K562 (cell line): ENCODE measurements at regions of chr1 and their contacts with region 1.

Region 1: DNA sequence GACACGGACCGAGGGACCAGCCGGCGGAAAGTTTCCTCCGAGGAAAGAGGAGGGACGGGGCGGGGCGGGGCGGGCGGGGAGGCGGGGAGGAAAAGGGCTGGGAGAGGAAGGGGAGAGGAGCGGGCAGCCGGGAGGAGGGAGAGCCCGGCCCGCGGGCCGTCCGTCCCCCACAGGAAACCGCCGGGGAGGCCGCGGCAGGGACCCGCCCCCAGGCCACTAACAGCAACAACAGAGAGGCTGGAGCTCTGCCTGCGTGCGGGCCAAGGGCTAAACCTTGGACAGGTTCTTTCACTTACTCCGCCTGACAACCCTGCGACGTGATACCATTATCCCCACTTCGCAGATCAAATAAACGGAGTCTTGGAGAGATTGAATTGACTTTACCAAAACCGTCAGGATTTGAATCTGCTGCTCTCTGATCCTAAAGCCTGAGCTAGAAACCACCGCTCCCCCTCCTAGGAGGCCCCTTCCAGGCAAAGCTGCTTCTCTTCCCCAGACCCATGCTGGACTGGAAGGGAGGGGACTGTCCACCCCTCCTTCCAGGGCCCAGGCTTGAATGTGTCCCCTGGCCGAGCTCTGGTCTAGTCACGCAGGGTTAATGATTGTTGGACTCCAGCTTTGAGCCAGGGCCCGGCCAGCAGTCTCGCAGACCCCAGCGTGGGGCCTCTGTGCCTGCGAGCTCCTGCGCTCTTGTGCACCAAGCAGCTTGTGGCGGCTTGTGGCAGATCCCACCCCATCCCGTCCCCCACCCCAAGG is at the start of gene EVA1B:
- DNase-seq: peak; percentile 89 to 91 (median 90)
- ATAC-seq: peak; percentile 31
- H3K4me3 ChIP-seq: peak within 1 kb of the TSS; percentile 61
- H3K27ac ChIP-seq: peak within 1 kb of the TSS; percentile 62
- H3K4me1 ChIP-seq: peaks cover 39 to 73% of the 10 kb centered on the region in 2 experiments
- H3K27me3 ChIP-seq: no peaks in the 10 kb centered on the region
- CTCF ChIP-seq: no peak
- EP300 ChIP-seq: no peak
- POLR2A ChIP-seq: no peak; the same call in 1 of the 2 replicates
- RAD21 ChIP-seq: no peak
- polyA plus RNA-seq, gene EVA1B: 0.08 to 0.13 TPM

Region 2: DNA sequence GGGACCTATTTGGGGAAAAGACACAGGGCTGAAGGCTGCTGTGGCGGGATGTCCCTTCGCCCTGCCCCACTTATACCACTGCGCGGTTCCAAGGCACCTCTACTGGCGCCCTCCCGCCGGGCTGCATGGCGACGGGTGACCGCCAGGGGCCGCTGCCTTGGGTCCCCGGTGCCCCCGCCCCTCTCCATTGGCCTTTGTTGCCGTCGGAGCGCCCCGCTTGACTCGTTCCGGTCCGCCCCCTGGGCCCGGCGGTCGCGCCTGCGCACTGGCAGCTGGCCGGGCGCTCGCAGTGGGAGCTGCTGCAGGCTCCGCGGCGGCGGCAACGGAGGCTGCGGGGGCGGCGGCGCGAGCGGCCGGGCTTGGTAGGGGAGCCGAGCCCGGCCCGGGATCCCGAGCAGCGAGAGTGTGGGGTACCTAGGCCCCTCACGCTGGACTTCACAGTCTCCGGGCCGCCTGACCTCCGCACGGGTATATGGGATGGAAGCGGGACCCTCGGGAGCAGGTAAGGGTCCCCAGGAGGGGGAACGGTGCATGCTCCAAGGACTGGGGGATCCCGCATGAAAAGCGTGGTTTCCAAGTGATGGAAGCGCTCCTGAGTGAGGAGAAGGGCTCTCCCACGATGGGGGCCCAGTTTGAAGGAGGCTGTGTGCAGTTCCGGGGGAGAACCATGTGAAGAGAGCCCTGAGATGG is 440.7 kb before region 1 on chr1 and contains the start of gene AGO1:
- CTCF ChIA-PET with region 1: no interaction called
- POLR2A ChIA-PET with region 1: no interaction called
- in situ Hi-C with region 1: no loop called
- intact Hi-C with region 1: loop called (anchors 10 kb)
- DNase-seq: peak; percentile 97 to 99 (median 99)
- ATAC-seq: peak; percentile 79
- H3K4me3 ChIP-seq: peak within 1 kb of the TSS; percentile 64
- H3K27ac ChIP-seq: peak within 1 kb of the TSS; percentile 73
- H3K4me1 ChIP-seq: peaks cover 47 to 72% of the 10 kb centered on the region in 2 experiments
- H3K27me3 ChIP-seq: no peaks in the 10 kb centered on the region
- CTCF ChIP-seq: peak; percentile 95 to 97 (median 97)
- EP300 ChIP-seq: no peak; the same call in 1 of the 2 replicates
- POLR2A ChIP-seq: peak; percentile 51; the same call in 1 of the 2 replicates
- RAD21 ChIP-seq: peak; percentile 56 to 73
- polyA plus RNA-seq, gene AGO1: 7.3 to 13.3 TPM

Region 3: GRCh38 chr1:36160949-36161485 is 162.8 kb before region 1 on chr1:
- CTCF ChIA-PET with region 1: no interaction called
- POLR2A ChIA-PET with region 1: no interaction called
- in situ Hi-C with region 1: no loop called
- intact Hi-C with region 1: no loop called
- DNase-seq: peak; percentile 65 to 72 (median 72)
- ATAC-seq: peak; percentile 64
- H3K4me3 ChIP-seq: peak overlapping the region; percentile 37
- H3K27ac ChIP-seq: peak overlapping the region; percentile 76
- H3K4me1 ChIP-seq: peaks cover 42 to 55% of the 10 kb centered on the region in 2 experiments
- H3K27me3 ChIP-seq: no peaks in the 10 kb centered on the region
- CTCF ChIP-seq: peak; percentile 60 to 76 (median 63)
- EP300 ChIP-seq: 0 out of 2 replicates have a peak, but pooled peaks have one; percentile 17
- POLR2A ChIP-seq: peak; percentile 70
- RAD21 ChIP-seq: peak; percentile 13 to 48; a peak in 3 of 4 replicates

Region 4: DNA sequence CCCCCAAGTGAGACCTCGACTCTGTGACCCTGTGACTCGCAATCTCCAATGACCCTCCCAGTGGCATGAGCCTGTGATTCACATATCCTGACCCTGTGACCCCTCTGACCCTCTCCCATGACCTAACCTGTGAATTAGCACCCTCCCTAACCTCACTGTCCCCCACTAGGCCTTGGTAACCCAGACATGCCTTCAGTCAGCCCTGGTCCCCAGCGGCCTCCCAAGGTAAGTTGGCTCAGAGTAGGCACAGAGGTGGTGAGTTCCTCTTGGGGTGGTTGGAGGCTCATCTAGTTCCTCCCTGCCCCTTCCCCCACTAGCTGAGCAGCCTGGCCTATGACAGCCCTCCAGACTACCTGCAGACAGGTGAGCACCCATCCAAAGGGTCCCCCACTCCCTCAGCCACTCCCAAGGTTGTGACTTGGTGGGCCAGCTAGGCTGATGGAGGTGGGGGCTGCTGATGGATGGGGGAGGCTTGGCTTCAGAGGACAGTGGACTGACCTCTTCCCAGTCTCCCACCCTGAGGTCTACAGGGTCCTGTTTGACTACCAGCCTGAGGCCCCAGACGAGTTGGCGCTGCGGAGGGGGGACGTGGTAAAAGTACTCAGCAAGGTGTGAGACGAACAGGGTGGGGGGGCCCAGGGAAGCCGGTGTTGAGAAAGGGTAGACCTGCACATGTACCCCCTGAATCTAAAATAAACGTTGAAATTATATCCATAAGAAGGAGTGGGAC is 16.0 kb before region 1 on chr1:
- CTCF ChIA-PET with region 1: no interaction called
- POLR2A ChIA-PET with region 1: interaction called, 19 read pairs
- in situ Hi-C with region 1: no loop called
- intact Hi-C with region 1: no loop called
- DNase-seq: peak in 1 of 4 experiments; percentile 28
- ATAC-seq: no peak
- H3K4me3 ChIP-seq: peak overlapping the region; percentile 51
- H3K27ac ChIP-seq: no peak overlapping the region
- H3K4me1 ChIP-seq: peaks cover 4 to 23% of the 10 kb centered on the region in 2 experiments; a peak in 3 of 5 replicates
- H3K27me3 ChIP-seq: no peaks in the 10 kb centered on the region
- CTCF ChIP-seq: no peak
- EP300 ChIP-seq: no peak
- POLR2A ChIP-seq: no peak
- RAD21 ChIP-seq: no peak

Region 5: DNA sequence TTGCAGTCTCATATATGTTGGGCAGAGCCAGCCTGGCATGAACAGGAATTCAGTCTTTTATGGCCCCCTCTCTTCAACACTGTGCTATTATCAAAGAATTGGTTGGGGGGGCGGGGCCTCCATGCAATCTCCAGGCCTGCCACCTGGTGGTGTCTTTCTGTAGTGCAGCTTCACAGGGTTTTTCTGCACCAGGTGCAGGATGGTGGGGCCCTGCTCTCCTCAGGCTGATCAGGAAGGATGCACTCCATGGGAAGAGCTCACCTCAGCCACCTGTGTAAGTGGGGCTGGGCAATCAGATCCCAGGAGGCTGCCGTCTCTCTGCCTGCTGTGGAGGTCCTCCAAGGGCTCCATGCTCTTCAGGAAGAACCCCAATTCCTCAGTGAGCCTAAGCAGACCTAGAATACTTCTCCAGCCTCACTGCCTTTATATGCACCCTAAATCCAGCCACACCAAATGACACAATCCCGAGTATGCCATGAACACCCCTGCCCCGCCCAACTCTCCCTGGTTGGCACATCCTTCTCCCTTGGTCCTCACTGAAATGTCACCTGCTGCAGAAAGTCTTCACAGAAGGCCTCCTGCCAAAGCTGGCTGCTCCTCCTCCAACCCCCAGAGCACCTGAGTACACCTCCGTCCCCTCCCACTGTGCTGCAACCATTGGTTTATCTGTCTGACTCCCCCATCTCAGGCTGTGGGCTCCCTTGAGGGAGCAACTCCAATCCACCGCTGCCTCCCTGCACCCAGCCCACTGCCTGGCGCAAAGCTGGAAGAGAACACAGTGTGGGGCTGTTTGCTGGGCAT is 45.5 kb after region 1 on chr1:
- CTCF ChIA-PET with region 1: no interaction called
- POLR2A ChIA-PET with region 1: interaction called, 3 read pairs
- in situ Hi-C with region 1: no loop called
- intact Hi-C with region 1: loop called (anchors 2 kb)
- DNase-seq: peak; percentile 89 to 91 (median 89)
- ATAC-seq: peak; percentile 61
- H3K4me3 ChIP-seq: no peak overlapping the region
- H3K27ac ChIP-seq: no peak overlapping the region; the same call in 2 of the 3 replicates
- H3K4me1 ChIP-seq: peaks cover 41 to 51% of the 10 kb centered on the region in 2 experiments
- H3K27me3 ChIP-seq: no peaks in the 10 kb centered on the region
- CTCF ChIP-seq: peak; percentile 94 to 96 (median 95)
- EP300 ChIP-seq: no peak
- POLR2A ChIP-seq: 0 out of 2 replicates have a peak, but pooled peaks have one; percentile 11
- RAD21 ChIP-seq: peak; percentile 60 to 80

Region 6: DNA sequence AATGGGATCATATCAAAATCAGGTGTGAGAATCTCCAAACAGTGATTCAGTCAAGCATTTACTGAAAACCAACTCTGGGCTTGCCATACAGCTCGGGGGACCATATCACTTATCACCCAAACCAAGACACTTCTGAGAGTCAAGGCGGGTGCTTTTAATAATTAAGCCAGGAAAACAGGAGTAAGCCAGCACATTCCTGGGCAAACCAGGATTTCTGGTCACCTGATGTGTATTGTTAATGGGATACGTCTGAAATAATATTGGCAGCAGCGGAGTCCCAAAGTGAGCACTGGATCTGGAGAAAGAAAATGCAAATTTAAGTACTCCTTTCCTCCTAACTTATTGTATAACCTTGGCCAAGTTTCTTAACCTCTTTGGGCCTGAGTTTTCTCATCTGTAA is 108.8 kb after region 1 on chr1:
- CTCF ChIA-PET with region 1: no interaction called
- POLR2A ChIA-PET with region 1: no interaction called
- in situ Hi-C with region 1: no loop called
- intact Hi-C with region 1: no loop called
- DNase-seq: no peak
- ATAC-seq: no peak
- H3K4me3 ChIP-seq: no peak overlapping the region
- H3K27ac ChIP-seq: no peak overlapping the region
- H3K4me1 ChIP-seq: no peaks in the 10 kb centered on the region
- H3K27me3 ChIP-seq: peaks cover 7 to 17% of the 10 kb centered on the region in 2 experiments; a peak in 4 of 5 replicates
- CTCF ChIP-seq: no peak
- EP300 ChIP-seq: no peak
- POLR2A ChIP-seq: no peak
- RAD21 ChIP-seq: no peak

Region 7: GRCh38 chr1:36446271-36446670 is 122.5 kb after region 1 on chr1:
- CTCF ChIA-PET with region 1: no interaction called
- POLR2A ChIA-PET with region 1: no interaction called
- in situ Hi-C with region 1: no loop called
- intact Hi-C with region 1: no loop called
- DNase-seq: peak; percentile 57 to 83 (median 70)
- ATAC-seq: peak; percentile 91
- H3K4me3 ChIP-seq: no peak overlapping the region
- H3K27ac ChIP-seq: no peak overlapping the region
- H3K4me1 ChIP-seq: peaks cover 14 to 19% of the 10 kb centered on the region in 2 experiments
- H3K27me3 ChIP-seq: no peaks in the 10 kb centered on the region
- CTCF ChIP-seq: peak; percentile 87 to 93 (median 92)
- EP300 ChIP-seq: no peak
- POLR2A ChIP-seq: no peak
- RAD21 ChIP-seq: peak; percentile 76 to 93